Activated T-helper 1 cell treated with anti-CD3 and anti-CD28 coated beads, Interleukin-12 subunit alpha, Interleukin-12 subunit beta, Interleukin-2, Interleukin-4 antibody, amounts not matched to agents 30 ng/mL and 10 ng/mL and 1 ng/mL, durations not matched to agents 14 hours and 24 hours and 36 hours (primary cell): ENCODE measurements at regions of chr2 and their contacts with region 1.

Region 1: GRCh38 chr2:214809751-214810564 is 475 bp upstream of the BARD1 start:
- DNase-seq: peak; percentile 100
- H3K4me3 Mint-ChIP-seq: peak overlapping the region; percentile 92
- H3K27ac Mint-ChIP-seq: peak overlapping the region; percentile 30
- H3K4me1 Mint-ChIP-seq: peaks cover 45% of the 10 kb centered on the region
- H3K27me3 Mint-ChIP-seq: peaks cover 14% of the 10 kb centered on the region

Region 2: DNA sequence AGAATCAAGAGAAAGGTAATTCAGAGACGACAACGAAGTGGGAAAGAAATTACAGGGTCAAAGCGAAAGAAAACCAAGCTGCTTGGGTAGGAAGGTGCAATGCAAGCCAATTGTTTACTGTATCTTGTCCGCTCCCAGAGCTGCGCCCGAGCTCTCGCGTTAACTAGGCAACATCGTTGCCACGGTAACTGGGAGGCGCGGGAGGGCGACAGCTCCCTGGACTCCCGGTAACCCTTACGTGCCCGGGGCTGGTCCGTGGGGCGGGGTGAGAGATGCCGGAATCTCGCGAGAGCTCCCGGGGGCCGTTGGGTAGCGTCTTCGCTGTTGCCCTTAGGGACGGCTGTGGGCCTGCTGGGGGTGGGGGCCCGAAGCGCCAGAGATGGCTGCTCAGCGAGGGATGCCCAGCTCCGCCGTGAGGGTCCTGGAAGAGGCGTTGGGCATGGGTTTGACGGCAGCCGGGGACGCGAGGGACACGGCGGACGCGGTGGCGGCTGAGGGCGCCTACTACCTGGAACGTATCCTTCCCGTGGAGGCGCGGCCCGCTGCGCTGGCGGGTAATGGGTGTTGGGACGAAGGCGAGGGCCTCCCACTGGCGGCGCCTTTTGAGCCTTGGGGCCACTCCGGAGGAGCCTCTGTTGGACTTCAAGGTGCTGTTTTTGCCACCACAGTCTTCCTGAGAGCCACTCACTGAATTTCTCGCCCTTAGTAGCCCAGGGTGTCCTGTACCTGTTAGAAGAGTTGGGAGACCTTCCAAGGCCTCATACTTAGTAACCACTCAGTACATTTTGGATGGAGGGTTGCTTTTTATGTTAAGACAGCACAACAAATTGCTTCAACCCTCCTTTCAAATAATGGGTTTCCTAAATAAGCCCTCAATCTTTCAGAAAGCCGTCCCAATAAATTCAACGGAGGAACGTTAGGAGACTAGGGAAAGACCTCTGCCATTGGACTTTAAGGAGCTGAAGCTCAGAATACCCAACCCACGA is 1525.6 kb before region 1 on chr2 and contains the start of gene SPAG16:
- intact Hi-C with region 1: loop called (anchors 1 kb)
- DNase-seq: peak; percentile 98
- H3K4me3 Mint-ChIP-seq: peak within 1 kb of the TSS; percentile 90
- H3K27ac Mint-ChIP-seq: peak within 1 kb of the TSS; percentile 84
- H3K4me1 Mint-ChIP-seq: peaks cover 25% of the 10 kb centered on the region
- H3K27me3 Mint-ChIP-seq: peaks cover 2% of the 10 kb centered on the region
- total RNA-seq, gene SPAG16: 7.3 TPM in 2 replicates

Region 3: GRCh38 chr2:214740868-214741395 is 69.0 kb before region 1 on chr2:
- intact Hi-C with region 1: loop called (anchors 2 kb)
- DNase-seq: no peak
- H3K4me3 Mint-ChIP-seq: no peak overlapping the region
- H3K27ac Mint-ChIP-seq: no peak overlapping the region
- H3K4me1 Mint-ChIP-seq: peaks cover 17% of the 10 kb centered on the region
- H3K27me3 Mint-ChIP-seq: no peaks in the 10 kb centered on the region

Region 4: DNA sequence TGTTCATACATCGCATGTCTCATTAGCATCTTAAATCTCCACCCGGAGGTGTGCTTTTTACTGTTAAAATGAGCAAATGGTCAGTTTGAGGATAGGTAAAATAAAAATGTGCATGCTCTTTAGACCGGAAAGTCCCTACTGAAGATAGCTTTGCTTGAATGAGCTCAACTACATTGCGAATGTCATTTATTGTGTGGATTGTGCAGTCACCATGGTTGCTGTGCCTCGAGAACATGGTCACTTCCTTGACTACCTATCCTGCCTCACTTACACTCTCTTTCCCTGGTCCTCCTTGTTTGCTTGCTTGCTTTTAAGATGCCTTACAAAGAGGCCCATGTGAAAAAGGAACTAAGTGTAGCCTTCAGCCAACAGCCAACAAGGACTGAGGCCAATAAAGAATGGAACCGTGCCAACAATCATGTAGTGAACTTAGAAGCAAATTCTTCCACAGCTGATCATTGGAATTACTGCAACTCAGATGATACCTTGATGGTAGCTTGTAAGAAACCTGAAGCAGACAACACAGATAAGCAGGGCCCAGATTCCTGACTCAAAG is 71.8 kb after region 1 on chr2:
- intact Hi-C with region 1: no loop called
- DNase-seq: no peak
- H3K4me3 Mint-ChIP-seq: no peak overlapping the region
- H3K27ac Mint-ChIP-seq: no peak overlapping the region
- H3K4me1 Mint-ChIP-seq: no peaks in the 10 kb centered on the region
- H3K27me3 Mint-ChIP-seq: peaks cover 4% of the 10 kb centered on the region

Region 5: GRCh38 chr2:215311625-215312396 is 501.9 kb after region 1 on chr2 and contains the start of gene ATIC:
- intact Hi-C with region 1: loop called (anchors 1 kb)
- DNase-seq: peak; percentile 90
- H3K4me3 Mint-ChIP-seq: peak within 1 kb of the TSS; percentile 97
- H3K27ac Mint-ChIP-seq: peak within 1 kb of the TSS; percentile 95
- H3K4me1 Mint-ChIP-seq: peaks cover 33% of the 10 kb centered on the region
- H3K27me3 Mint-ChIP-seq: no peaks in the 10 kb centered on the region
- total RNA-seq, gene ATIC: 287 and 299 TPM in 2 replicates

Region 6: DNA sequence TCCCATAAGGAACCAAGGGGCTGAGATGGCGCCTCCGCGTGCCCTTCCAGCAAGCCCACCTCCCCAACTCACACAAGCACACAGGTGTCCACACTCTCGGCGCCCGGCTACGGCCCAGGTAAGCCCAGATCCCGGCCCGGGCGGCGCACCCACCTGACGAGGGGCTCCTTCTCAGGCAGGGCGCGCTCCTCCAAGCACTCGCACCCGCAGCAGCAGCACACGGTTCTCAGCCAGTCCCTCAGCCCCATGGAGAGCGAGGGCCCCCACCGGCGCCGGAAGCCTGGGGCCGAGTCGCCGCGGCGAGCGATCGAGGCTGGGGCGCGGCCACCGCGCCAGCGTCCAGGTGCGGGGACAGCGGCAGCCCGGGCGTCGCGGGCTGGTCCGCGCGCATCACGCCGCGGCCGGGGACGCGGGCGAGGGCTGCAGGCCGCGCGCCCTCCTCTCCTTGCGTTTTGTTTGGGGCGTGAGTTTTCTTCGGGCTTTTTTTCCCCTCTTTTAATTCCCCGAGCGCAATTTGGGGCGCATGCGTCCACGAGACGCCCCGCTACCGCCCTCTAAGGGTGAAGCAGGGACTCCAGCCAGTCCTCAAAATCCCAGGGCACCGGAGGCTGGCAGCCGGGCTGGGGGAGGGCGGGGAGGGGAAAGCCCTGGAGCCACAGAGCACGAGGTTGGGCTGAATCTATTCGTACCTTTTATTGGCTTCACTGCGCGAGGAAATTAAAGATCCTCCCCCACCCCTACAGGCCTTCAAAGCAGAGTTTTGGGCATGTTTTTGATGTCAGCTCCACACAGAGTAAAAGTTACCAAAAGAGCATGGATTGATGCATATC is 1203.3 kb after region 1 on chr2 and contains the start of gene MREG:
- intact Hi-C with region 1: loop called (anchors 5 kb)
- DNase-seq: peak; percentile 74
- H3K4me3 Mint-ChIP-seq: peak within 1 kb of the TSS; percentile 80
- H3K27ac Mint-ChIP-seq: peak within 1 kb of the TSS; percentile 56
- H3K4me1 Mint-ChIP-seq: peaks cover 53% of the 10 kb centered on the region
- H3K27me3 Mint-ChIP-seq: peaks cover 2% of the 10 kb centered on the region
- total RNA-seq, gene MREG: 9.2 and 10.1 TPM in 2 replicates